ENCODE measurements at regions of chr7 and their contacts with region 1.

Region 1: GRCh38 chr7:111145472-111145871 is 54.5 kb downstream of the LRRN3 start:
- DNase-seq: no peak
- ATAC-seq: no peak
- H3K4me3 ChIP-seq: no peak overlapping the region
- H3K4me3 Mint-ChIP-seq: no peak overlapping the region
- H3K27ac ChIP-seq: no peak overlapping the region
- H3K27ac Mint-ChIP-seq: no peak overlapping the region
- H3K4me1 ChIP-seq: no peaks in the 10 kb centered on the region
- H3K4me1 Mint-ChIP-seq: no peaks in the 10 kb centered on the region
- H3K27me3 ChIP-seq: no peaks in the 10 kb centered on the region
- H3K27me3 Mint-ChIP-seq: no peaks in the 10 kb centered on the region

Region 2: GRCh38 chr7:110645060-110645459 is 500.4 kb before region 1 on chr7:
- CTCF ChIA-PET with region 1: no interaction called
- POLR2A ChIA-PET with region 1: no interaction called
- DNase-seq: no peak
- ATAC-seq: no peak
- H3K4me3 ChIP-seq: no peak overlapping the region
- H3K4me3 Mint-ChIP-seq: no peak overlapping the region
- H3K27ac ChIP-seq: no peak overlapping the region
- H3K27ac Mint-ChIP-seq: no peak overlapping the region
- H3K4me1 ChIP-seq: no peaks in the 10 kb centered on the region
- H3K4me1 Mint-ChIP-seq: no peaks in the 10 kb centered on the region
- H3K27me3 ChIP-seq: no peaks in the 10 kb centered on the region
- H3K27me3 Mint-ChIP-seq: peaks cover 0 to 2% of the 10 kb centered on the region in 2 donors

Region 3: DNA sequence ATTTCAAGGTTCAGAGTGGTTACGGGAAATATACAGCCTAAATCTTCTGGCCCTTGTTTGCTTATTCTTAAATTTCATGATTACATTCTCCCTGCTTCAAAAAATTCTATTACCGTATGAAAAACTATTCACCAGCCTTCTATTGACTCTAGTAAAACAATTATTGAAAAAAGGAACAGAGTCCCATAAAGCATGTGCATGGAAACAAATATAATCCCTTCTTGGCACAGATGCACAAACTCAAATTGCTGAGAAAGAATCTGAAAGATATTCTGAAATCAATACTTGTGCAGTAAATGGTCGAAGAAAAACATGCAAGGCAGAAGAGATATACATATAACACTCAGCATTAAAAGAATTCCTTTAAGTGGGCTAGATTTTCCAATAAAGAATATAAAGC is 29.0 kb after region 1 on chr7:
- CTCF ChIA-PET with region 1: no interaction called
- POLR2A ChIA-PET with region 1: interaction called in 1 of 2 experiments, 13 read pairs
- DNase-seq: no peak
- ATAC-seq: no peak
- H3K4me3 ChIP-seq: no peak overlapping the region
- H3K4me3 Mint-ChIP-seq: no peak overlapping the region
- H3K27ac ChIP-seq: no peak overlapping the region
- H3K27ac Mint-ChIP-seq: no peak overlapping the region
- H3K4me1 ChIP-seq: peaks cover 0 to 2% of the 10 kb centered on the region in 2 experiments
- H3K4me1 Mint-ChIP-seq: peaks cover 13 to 20% (median 14%) of the 10 kb centered on the region in 3 donors
- H3K27me3 ChIP-seq: no peaks in the 10 kb centered on the region
- H3K27me3 Mint-ChIP-seq: no peaks in the 10 kb centered on the region

Measured in T-cell (primary cell).